ENCODE measurements at regions of chr1 and their contacts with region 1.

Region 1: GRCh38 chr1:81351864-81352263 is 448.9 kb upstream of the ADGRL2 start:
- DNase-seq: no peak
- ATAC-seq: no peak
- H3K4me3 ChIP-seq: no peak overlapping the region
- H3K27ac ChIP-seq: no peak overlapping the region
- H3K4me1 ChIP-seq: no peaks in the 10 kb centered on the region
- H3K27me3 ChIP-seq: no peaks in the 10 kb centered on the region
- CTCF ChIP-seq: no peak
- EP300 ChIP-seq: no peak
- POLR2A ChIP-seq: no peak
- RAD21 ChIP-seq: no peak

Region 2: GRCh38 chr1:80918355-80918754 is 433.5 kb before region 1 on chr1:
- CTCF ChIA-PET with region 1: no interaction called
- POLR2A ChIA-PET with region 1: no interaction called
- RAD21 ChIA-PET with region 1: no interaction called
- SMC1A ChIA-PET with region 1: no interaction called
- in situ Hi-C with region 1: no loop called
- intact Hi-C with region 1: no loop called
- DNase-seq: no peak
- ATAC-seq: no peak
- H3K4me3 ChIP-seq: no peak overlapping the region
- H3K27ac ChIP-seq: no peak overlapping the region
- H3K4me1 ChIP-seq: no peaks in the 10 kb centered on the region
- H3K27me3 ChIP-seq: no peaks in the 10 kb centered on the region
- CTCF ChIP-seq: no peak
- EP300 ChIP-seq: no peak
- POLR2A ChIP-seq: no peak
- RAD21 ChIP-seq: no peak

Region 3: GRCh38 chr1:81330521-81330920 is 21.3 kb before region 1 on chr1:
- CTCF ChIA-PET with region 1: no interaction called
- POLR2A ChIA-PET with region 1: no interaction called
- RAD21 ChIA-PET with region 1: no interaction called
- SMC1A ChIA-PET with region 1: no interaction called
- in situ Hi-C with region 1: no loop called
- intact Hi-C with region 1: loop called (anchors 2 kb)
- DNase-seq: no peak
- ATAC-seq: no peak
- H3K4me3 ChIP-seq: no peak overlapping the region
- H3K27ac ChIP-seq: no peak overlapping the region
- H3K4me1 ChIP-seq: no peaks in the 10 kb centered on the region
- H3K27me3 ChIP-seq: no peaks in the 10 kb centered on the region
- CTCF ChIP-seq: no peak
- EP300 ChIP-seq: no peak
- POLR2A ChIP-seq: no peak
- RAD21 ChIP-seq: no peak

Region 4: DNA sequence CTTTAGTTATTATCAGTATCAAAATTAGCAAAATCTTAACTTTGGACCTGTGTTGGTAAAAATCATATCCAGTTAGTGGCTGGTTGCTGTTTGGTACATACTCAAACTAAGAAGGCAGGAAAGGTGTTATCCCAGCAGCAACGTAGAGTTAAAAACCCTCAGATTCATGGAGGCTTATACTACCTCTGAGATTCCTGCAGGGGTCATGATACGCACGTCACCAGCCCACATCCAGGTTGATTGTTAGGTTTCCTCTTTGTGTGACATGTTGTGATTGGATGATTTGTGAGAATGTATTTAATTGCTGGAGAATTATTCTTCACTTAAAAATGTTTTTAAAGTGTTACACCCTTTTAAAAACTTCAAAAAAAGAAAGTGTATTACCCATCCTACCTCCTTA is 25.5 kb after region 1 on chr1:
- CTCF ChIA-PET with region 1: no interaction called
- POLR2A ChIA-PET with region 1: no interaction called
- RAD21 ChIA-PET with region 1: no interaction called
- SMC1A ChIA-PET with region 1: no interaction called
- in situ Hi-C with region 1: no loop called
- intact Hi-C with region 1: no loop called
- DNase-seq: no peak
- ATAC-seq: peak; percentile 58; the same call in 2 of the 3 replicates
- H3K4me3 ChIP-seq: no peak overlapping the region
- H3K27ac ChIP-seq: no peak overlapping the region
- H3K4me1 ChIP-seq: no peaks in the 10 kb centered on the region
- H3K27me3 ChIP-seq: no peaks in the 10 kb centered on the region
- CTCF ChIP-seq: no peak; a peak in 1 of 6 replicates
- EP300 ChIP-seq: no peak
- POLR2A ChIP-seq: no peak
- RAD21 ChIP-seq: peak; percentile 53